ENCODE measurements at regions of chr3 and their contacts with region 1.

Region 1: DNA sequence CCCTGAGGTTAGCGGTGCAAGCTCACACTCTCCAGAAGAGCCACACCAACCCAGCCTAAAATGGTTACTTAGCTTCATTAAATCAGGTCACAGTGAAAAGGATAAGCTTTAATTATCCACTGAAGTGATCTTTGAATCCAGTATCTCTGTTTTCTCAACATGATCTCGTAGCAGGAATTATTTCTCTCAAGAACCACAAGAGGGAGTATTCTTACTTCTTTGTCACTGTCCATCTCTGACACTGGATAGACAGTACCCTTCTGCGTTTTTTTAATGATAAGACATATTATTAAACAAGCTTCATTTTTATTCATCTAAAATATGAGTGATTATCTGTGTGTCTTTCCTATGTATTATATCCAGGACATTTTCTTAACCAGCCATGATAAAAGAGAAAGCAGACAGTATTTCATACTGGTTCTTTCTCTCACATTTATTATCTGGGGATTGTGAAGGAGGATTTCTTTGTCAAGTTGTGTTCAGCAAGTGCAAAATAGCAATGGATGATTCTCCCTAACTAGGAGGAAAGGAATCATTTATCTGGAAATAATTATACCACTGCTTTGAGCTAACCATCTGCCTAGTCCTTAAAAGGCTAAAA is 105.4 kb upstream of the CCDC54 start:
- DNase-seq: no peak
- ATAC-seq: peak; percentile 54
- H3K4me3 Mint-ChIP-seq: no peak overlapping the region
- H3K27ac Mint-ChIP-seq: no peak overlapping the region
- H3K4me1 Mint-ChIP-seq: peaks cover 2% of the 10 kb centered on the region
- H3K27me3 Mint-ChIP-seq: peaks cover 3% of the 10 kb centered on the region
- CTCF ChIP-seq: no peak

Region 2: DNA sequence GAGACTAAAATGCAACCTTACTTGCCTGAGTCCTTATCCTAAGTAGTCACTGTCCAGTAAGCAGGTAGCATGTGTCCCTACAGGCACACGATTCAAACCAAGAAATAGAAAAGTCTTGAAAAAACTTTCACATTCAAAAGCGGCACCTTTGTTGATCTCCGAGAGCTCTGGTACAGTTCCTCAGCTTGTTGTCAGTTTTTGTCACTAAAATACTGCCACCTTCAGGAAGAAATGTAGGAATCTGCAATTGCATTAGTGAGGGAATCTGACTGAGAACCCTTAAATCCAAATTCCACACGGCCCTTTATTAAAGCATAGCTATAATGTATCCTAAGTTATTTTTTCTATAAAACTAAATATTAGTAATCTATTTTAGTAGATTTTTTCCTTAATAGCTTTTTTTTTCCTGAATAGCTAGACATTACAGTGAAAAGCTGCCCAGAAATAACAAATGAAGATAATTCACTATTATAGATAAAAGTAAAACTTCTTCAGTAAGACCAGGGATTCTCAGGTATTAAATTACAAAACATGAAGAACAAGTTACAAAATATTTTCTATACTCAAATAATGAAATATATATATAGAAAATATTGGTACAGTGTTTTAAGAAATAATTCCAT is 149.4 kb after region 1 on chr3:
- CTCF ChIA-PET with region 1: interaction called, 51 read pairs
- POLR2A ChIA-PET with region 1: no interaction called
- intact Hi-C with region 1: loop called (anchors 1 kb)
- DNase-seq: no peak
- ATAC-seq: peak; percentile 57
- H3K4me3 Mint-ChIP-seq: peak overlapping the region; percentile 62
- H3K27ac Mint-ChIP-seq: no peak overlapping the region
- H3K4me1 Mint-ChIP-seq: peaks cover 16% of the 10 kb centered on the region
- H3K27me3 Mint-ChIP-seq: no peaks in the 10 kb centered on the region
- CTCF ChIP-seq: peak; percentile 78

Region 3: DNA sequence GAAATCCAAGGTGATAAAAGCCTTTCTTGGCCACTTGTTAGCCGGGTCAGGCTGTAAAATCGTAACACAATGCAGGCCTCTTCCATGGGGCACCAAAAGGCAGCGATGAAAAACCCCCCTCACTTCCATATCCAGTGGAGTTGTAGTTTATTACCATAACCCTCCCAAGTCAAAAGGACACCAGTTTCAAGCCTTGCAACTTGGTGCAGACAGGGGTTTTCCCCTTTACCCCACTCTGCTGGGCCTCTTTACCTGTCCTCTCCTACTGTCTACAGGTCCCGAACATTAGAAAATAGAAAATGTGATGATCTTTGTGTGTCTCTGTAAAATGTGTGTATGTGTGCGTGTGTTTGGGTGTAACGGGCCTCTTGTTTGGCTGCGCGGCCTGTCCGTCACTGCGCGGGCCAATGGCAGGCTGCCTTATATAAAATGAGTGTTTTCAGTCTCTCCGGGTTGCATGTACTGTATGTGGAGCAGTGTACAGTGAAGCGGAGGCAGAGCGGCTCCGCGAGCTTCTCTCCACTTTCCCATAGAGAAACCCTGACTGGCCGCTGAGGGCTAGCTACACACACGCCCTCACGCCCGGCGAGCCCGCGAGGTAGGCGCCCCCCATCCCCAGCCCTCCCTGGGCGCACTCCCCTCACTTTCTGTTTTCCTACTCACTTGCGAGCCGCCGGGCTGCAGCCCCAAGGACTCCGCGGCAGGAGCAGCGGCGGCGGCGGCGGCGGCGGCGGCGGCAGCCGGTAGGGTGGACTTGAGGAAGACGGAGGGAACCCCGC is 250.8 kb after region 1 on chr3 and contains the start of gene BBX:
- CTCF ChIA-PET with region 1: interaction called, 5 read pairs
- POLR2A ChIA-PET with region 1: no interaction called
- intact Hi-C with region 1: loop called (anchors 5 kb)
- DNase-seq: peak; percentile 89
- ATAC-seq: peak; percentile 87
- H3K4me3 Mint-ChIP-seq: peak within 1 kb of the TSS; percentile 96
- H3K27ac Mint-ChIP-seq: peak within 1 kb of the TSS; percentile 98
- H3K4me1 Mint-ChIP-seq: peaks cover 37% of the 10 kb centered on the region
- H3K27me3 Mint-ChIP-seq: no peaks in the 10 kb centered on the region
- CTCF ChIP-seq: no peak
- total RNA-seq, gene BBX: 75.8 and 77.5 TPM in 2 replicates

Region 4: GRCh38 chr3:107543666-107544065 is 271.8 kb after region 1 on chr3:
- CTCF ChIA-PET with region 1: interaction called, 7 read pairs
- POLR2A ChIA-PET with region 1: no interaction called
- intact Hi-C with region 1: loop called (anchors 1 kb)
- DNase-seq: no peak
- ATAC-seq: no peak
- H3K4me3 Mint-ChIP-seq: no peak overlapping the region
- H3K27ac Mint-ChIP-seq: no peak overlapping the region
- H3K4me1 Mint-ChIP-seq: peaks cover 18% of the 10 kb centered on the region
- H3K27me3 Mint-ChIP-seq: no peaks in the 10 kb centered on the region
- CTCF ChIP-seq: no peak

Region 5: GRCh38 chr3:107633327-107634098 is 361.6 kb after region 1 on chr3:
- CTCF ChIA-PET with region 1: no interaction called
- POLR2A ChIA-PET with region 1: no interaction called
- intact Hi-C with region 1: loop called (anchors 10 kb)
- DNase-seq: no peak
- ATAC-seq: peak; percentile 52
- H3K4me3 Mint-ChIP-seq: no peak overlapping the region
- H3K27ac Mint-ChIP-seq: peak overlapping the region; percentile 68
- H3K4me1 Mint-ChIP-seq: peaks cover 44% of the 10 kb centered on the region
- H3K27me3 Mint-ChIP-seq: no peaks in the 10 kb centered on the region
- CTCF ChIP-seq: no peak

Region 6: DNA sequence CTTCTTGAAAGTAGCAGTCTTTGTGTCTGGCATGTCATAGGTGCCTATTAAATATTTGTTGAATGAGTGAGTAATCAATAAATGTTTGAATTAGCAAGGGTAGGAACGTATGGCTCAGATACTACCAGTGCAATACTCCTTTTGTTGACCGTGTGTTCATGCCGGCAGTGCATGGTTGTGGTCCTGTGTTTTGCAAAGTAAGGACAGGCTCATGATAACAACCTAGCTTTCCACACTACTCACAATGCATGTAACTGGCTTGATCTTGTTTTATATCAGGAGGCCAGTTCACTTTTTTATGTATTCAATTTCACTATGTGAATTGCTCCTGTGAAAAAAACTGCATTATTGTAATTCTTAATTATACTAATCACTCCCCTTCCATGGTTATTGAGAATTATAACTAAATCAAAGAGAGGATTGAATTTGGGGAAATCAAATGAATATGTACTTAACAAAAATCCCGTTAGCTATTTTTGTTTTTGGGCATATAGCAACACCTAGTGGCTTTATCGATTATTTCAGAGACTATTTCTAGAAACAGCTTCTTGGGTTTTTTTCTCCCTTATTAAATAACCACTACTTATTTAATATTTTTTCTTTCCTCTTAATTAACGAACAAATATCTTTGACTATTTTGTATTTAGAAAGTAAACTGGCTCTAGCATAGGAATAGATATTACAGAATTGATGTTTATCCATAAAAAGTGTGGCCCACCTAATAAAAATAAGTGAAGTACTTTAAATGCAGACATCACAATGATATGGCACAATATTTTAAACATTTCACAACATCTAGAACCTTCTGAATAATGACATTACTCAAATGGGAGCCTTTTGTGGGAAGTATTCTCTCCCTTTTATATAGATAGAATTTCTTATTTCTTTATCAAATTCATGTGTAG is 469.4 kb after region 1 on chr3:
- CTCF ChIA-PET with region 1: interaction called, 9 read pairs
- POLR2A ChIA-PET with region 1: no interaction called
- intact Hi-C with region 1: loop called (anchors 1 kb)
- DNase-seq: no peak
- ATAC-seq: no peak
- H3K4me3 Mint-ChIP-seq: no peak overlapping the region
- H3K27ac Mint-ChIP-seq: no peak overlapping the region
- H3K4me1 Mint-ChIP-seq: peaks cover 31% of the 10 kb centered on the region
- H3K27me3 Mint-ChIP-seq: no peaks in the 10 kb centered on the region
- CTCF ChIP-seq: no peak